Activated CD8-positive, alpha-beta memory T cell treated with anti-CD3 and anti-CD28 coated beads, Interleukin-2, amount 10 ng/mL, durations not matched to agents 7 days and 5 days (primary cell): ENCODE measurements at regions of chr6 and their contacts with region 1.

Region 1: DNA sequence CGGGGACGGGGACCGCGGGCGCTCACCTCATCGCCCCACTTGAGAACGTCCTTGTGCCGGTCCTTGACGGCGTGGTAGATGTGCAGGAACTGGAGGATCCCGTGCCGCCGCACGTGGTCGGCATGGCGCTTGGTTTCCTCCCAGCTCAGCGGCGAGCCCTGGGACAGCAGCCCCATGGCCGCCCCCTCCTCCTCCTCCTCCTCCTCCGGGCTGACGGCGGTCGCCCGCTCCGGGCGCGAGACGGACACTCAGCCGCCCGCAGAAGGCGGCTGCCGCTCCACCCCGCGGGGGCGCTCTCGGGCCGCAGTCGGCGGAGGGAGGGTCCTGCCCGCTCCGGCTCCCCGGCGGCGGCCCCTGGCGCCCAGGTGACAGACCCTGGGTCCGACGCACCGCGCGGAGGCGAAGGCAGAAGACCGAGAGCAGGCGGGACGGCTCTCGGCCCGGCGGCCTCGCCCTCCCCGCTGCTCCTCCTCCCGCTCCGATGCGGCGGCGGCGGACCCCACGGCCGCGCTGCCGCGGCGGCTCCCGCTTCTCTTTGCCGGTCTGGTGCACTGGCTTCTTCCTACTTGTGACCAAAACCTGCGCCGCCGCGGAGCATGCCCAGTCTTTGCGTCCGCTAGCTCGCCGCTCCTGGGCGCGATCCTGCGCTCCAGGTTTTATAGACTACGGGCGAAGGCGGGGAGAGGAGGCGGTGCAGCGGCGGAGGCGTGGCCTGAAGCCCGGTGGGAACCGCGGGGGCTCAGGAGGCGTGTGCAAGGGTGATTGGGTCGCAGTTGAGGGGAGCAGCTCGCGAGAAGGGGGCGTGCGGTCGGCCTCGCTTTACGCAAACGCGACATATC is at the start of gene GCLC:
- DNase-seq: peak; percentile 94
- ATAC-seq: peak; percentile 62
- H3K4me3 Mint-ChIP-seq: peak within 1 kb of the TSS; percentile 96
- H3K27ac Mint-ChIP-seq: peak within 1 kb of the TSS; percentile 94
- H3K4me1 Mint-ChIP-seq: peaks cover 56% of the 10 kb centered on the region
- H3K27me3 Mint-ChIP-seq: peaks cover 13% of the 10 kb centered on the region
- total RNA-seq, gene GCLC: 33.7 to 36.3 TPM

Region 2: DNA sequence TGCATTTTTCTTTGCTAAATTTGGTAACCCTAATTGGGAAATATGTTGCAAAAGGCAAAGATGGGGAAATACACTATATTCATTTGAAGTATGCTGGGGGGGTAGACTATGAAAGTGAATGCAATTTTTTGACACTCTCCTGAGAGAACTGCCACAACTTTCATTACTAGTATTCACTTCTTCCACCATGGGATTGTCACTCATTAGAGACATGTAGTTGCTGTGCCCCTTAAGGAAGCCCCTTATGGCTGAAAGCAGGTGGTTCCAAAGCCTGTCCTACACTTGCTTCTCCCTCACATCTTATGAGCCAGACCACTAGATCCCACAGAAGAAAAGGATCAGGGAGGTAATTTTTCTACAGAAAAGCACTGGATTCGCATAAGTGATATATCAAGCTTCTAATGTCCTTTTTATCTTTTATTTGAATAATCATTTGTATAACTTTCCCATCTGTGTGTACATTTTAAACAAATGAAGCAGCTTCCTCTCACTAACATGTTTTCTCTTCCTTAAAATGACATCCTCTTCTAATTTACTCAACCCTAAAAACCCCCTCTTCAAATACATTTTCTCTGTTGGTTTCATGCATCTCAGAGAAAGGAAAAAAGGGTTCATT is 83.5 kb before region 1 on chr6:
- CTCF ChIA-PET with region 1: no interaction called
- DNase-seq: no peak
- ATAC-seq: no peak
- H3K4me3 Mint-ChIP-seq: no peak overlapping the region
- H3K27ac Mint-ChIP-seq: no peak overlapping the region
- H3K4me1 Mint-ChIP-seq: no peaks in the 10 kb centered on the region
- H3K27me3 Mint-ChIP-seq: no peaks in the 10 kb centered on the region

Region 3: DNA sequence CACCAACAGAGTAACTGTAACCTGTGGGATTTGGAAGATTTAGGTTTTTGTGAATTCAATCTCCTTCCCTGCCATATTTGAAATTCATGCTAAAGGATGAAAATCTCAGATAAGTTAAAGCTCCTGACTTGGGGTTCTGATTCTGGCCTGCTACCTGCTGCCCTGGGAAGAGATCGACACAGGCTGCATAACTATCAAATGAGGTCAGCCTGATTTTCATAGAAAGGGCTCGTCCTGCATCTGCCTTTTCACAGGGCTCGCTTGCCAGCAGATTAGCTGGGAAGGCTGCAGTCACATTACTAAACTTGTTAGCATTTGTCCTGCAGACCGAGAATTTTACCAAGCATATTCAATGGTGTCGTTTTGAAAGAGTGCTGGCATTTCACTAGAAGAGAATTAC is 14.3 kb before region 1 on chr6:
- CTCF ChIA-PET with region 1: interaction called, 11 read pairs
- DNase-seq: no peak
- ATAC-seq: no peak
- H3K4me3 Mint-ChIP-seq: no peak overlapping the region
- H3K27ac Mint-ChIP-seq: no peak overlapping the region
- H3K4me1 Mint-ChIP-seq: peaks cover 30% of the 10 kb centered on the region
- H3K27me3 Mint-ChIP-seq: no peaks in the 10 kb centered on the region

Region 4: DNA sequence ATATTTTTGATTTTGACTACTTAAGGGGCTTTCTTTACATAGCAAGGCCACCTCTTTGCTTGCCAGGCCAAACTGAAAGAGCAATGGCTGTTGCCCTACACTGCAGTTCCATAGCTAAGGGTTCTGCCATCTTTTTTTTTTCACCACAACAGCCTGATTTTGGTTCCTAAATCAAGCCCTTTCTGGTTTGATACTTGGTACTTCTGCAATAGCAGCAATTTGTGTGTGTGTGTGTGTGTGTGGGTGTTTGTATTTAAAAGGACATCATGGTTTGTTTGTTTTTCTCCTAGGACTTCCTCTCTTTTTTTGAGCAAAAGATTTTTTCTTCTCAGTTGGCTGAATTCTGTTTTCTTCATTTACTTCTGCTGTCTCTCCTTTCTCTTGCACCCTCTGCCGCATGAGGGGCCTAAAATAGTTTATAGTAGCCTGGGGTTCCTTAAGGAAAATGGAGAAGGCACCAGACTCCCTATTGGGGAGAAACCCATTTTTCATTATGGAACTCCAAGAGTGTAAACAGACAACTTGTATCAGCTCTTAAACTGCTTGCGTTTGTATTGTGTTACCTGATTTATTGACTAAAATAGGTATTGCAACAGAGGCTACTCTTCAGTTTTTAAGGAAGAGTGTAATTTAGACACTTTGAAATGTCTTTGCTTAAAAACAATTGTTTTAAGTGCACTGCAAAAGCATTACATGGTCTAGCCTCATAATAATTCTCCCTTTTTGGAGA is 12.5 kb after region 1 on chr6:
- CTCF ChIA-PET with region 1: no interaction called
- DNase-seq: no peak
- ATAC-seq: no peak
- H3K4me3 Mint-ChIP-seq: no peak overlapping the region
- H3K27ac Mint-ChIP-seq: no peak overlapping the region
- H3K4me1 Mint-ChIP-seq: peaks cover 2% of the 10 kb centered on the region
- H3K27me3 Mint-ChIP-seq: peaks cover 2% of the 10 kb centered on the region

Region 5: GRCh38 chr6:53651764-53652401 is 107.2 kb after region 1 on chr6:
- CTCF ChIA-PET with region 1: interaction called, 40 read pairs
- DNase-seq: peak; percentile 88
- ATAC-seq: peak; percentile 95
- H3K4me3 Mint-ChIP-seq: peak overlapping the region; percentile 85
- H3K27ac Mint-ChIP-seq: peak overlapping the region; percentile 91
- H3K4me1 Mint-ChIP-seq: peaks cover 38% of the 10 kb centered on the region
- H3K27me3 Mint-ChIP-seq: peaks cover 7% of the 10 kb centered on the region